Caco-2 (cell line): ENCODE measurements at regions of chr17 and their contacts with region 1.

Region 1: DNA sequence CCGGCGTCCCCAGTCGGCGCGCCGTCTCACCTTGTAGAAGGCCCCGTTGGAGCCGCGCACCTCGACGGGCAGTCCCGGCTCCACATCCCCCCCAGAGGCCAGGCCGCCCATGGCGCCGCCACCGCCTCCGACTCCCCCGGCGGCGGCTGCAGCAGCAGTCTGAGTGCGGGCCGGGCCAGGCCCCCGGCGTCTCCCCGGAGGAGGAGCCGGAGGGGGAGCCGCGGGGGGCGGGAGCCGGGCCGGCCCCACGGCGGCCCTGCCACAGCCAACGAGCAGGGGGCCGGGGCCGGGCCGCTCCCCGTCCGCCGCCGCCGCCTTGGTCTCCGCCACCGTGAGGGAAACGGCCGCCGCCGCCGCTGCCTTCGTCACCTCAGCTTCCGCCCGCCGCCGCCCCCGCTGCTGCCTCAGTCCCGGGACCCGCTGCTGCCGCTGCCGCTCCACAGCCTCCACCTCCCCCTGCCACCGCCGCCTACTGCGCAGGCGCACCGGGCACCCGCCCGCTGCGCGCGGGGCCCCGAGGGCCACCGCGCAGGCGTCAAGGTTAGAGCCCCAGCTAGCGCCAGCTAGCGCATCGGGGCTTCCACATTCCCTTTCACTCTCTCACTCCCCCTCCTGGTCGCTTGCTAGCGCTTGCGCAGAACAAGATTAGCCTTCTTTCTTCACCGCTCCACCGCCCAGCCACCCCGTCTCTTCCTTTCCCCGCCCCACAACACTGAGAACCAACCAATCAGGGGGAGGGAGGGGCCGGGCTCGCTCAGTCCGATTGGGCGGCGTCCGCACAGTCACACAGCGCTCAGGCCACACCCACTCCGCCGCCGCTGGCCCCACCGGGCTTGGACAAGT is at the start of gene FXR2:
- DNase-seq: peak; percentile 96 to 97
- H3K4me3 ChIP-seq: peak within 1 kb of the TSS; percentile 57
- H3K4me3 Mint-ChIP-seq: peak within 1 kb of the TSS; percentile 98
- H3K27ac Mint-ChIP-seq: peak within 1 kb of the TSS; percentile 94
- H3K4me1 ChIP-seq: no peaks in the 10 kb centered on the region
- H3K4me1 Mint-ChIP-seq: peaks cover 20% of the 10 kb centered on the region
- H3K27me3 ChIP-seq: no peaks in the 10 kb centered on the region
- H3K27me3 Mint-ChIP-seq: no peaks in the 10 kb centered on the region
- CTCF ChIP-seq: peak; percentile 24 to 49
- total RNA-seq, gene FXR2: 20.5 and 25.3 TPM in 2 replicates

Region 2: GRCh38 chr17:7572588-7573323 is 41.9 kb before region 1 on chr17:
- CTCF ChIA-PET with region 1: interaction called, 4 read pairs
- POLR2A ChIA-PET with region 1: no interaction called
- intact Hi-C with region 1: loop called (anchors 2 kb)
- DNase-seq: peak; percentile 96
- H3K4me3 ChIP-seq: peak overlapping the region; percentile 98
- H3K4me3 Mint-ChIP-seq: peak overlapping the region; percentile 92
- H3K27ac Mint-ChIP-seq: peak overlapping the region; percentile 99
- H3K4me1 ChIP-seq: peaks cover 12% of the 10 kb centered on the region
- H3K4me1 Mint-ChIP-seq: peaks cover 1% of the 10 kb centered on the region
- H3K27me3 ChIP-seq: no peaks in the 10 kb centered on the region
- H3K27me3 Mint-ChIP-seq: no peaks in the 10 kb centered on the region
- CTCF ChIP-seq: no peak

Region 3: GRCh38 chr17:7583253-7584109 is 31.2 kb before region 1 on chr17 and contains the start of gene MPDU1:
- CTCF ChIA-PET with region 1: interaction called, 6 read pairs
- POLR2A ChIA-PET with region 1: interaction called, 17 read pairs
- intact Hi-C with region 1: no loop called
- DNase-seq: peak; percentile 92 to 93
- H3K4me3 ChIP-seq: peak within 1 kb of the TSS; percentile 59
- H3K4me3 Mint-ChIP-seq: peak within 1 kb of the TSS; percentile 96
- H3K27ac Mint-ChIP-seq: peak within 1 kb of the TSS; percentile 100
- H3K4me1 ChIP-seq: peaks cover 10% of the 10 kb centered on the region
- H3K4me1 Mint-ChIP-seq: peaks cover 25% of the 10 kb centered on the region
- H3K27me3 ChIP-seq: no peaks in the 10 kb centered on the region
- H3K27me3 Mint-ChIP-seq: no peaks in the 10 kb centered on the region
- CTCF ChIP-seq: no peak
- total RNA-seq, gene MPDU1: 44.2 and 49.7 TPM in 2 replicates

Region 4: DNA sequence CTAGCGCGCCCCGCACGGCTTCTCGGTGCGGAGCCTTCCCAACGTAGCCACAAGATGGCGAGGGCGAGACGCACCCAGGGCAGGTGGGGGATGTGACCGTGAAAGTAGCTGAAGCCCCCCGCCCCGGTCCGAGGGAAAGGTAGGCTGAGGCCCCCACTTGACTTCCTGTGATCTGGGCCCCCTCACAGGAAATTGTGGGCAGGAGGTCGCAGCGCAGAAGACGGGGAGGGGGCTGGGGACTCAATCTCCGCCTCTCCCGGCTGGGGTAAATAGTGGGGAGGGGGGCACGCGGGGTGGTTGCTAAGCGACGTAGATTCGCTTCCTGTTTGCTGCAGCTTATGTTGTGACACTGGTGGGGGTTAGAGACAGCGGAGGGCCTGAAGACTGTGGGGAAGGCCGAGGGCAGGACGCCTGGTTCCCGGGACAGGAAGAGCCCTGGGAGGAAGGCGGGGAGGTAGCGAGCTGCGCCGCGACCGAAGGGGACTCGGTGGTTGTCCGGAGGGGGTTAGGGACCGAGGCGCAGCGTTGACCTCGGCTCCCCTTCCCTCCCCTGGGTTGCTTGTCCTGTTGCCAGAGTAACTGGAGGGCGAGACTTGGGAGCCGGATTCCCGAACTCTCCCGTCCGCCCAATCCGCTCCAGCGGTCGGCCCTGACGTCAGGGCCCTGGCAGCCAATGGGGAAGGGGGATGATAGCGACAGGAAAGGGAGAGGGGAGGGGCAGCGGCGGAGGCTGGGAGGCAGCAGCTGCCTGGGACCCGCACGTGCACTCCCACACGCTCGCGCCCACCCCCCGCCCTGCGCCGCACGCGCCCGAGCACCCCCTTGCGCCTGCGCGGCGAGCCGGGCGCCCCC is 220.5 kb after region 1 on chr17:
- CTCF ChIA-PET with region 1: no interaction called
- POLR2A ChIA-PET with region 1: no interaction called
- intact Hi-C with region 1: loop called (anchors 5 kb)
- DNase-seq: peak; percentile 90 to 95
- H3K4me3 ChIP-seq: peak overlapping the region; percentile 82
- H3K4me3 Mint-ChIP-seq: peak overlapping the region; percentile 98
- H3K27ac Mint-ChIP-seq: peak overlapping the region; percentile 99
- H3K4me1 ChIP-seq: peaks cover 23% of the 10 kb centered on the region
- H3K4me1 Mint-ChIP-seq: peaks cover 19% of the 10 kb centered on the region
- H3K27me3 ChIP-seq: no peaks in the 10 kb centered on the region
- H3K27me3 Mint-ChIP-seq: no peaks in the 10 kb centered on the region
- CTCF ChIP-seq: peak; percentile 31 to 69